ENCODE measurements at regions of chr6 and their contacts with region 1.

Region 1: GRCh38 chr6:80106418-80107235 is at the start of gene BCKDHB:
- DNase-seq: peak; percentile 98
- ATAC-seq: peak; percentile 98
- H3K4me3 Mint-ChIP-seq: peak within 1 kb of the TSS; percentile 90
- H3K27ac Mint-ChIP-seq: peak within 1 kb of the TSS; percentile 88
- H3K4me1 Mint-ChIP-seq: peaks cover 12% of the 10 kb centered on the region
- H3K27me3 Mint-ChIP-seq: peaks cover 6% of the 10 kb centered on the region
- total RNA-seq, gene BCKDHB: 13.1 to 21.4 TPM

Region 2: DNA sequence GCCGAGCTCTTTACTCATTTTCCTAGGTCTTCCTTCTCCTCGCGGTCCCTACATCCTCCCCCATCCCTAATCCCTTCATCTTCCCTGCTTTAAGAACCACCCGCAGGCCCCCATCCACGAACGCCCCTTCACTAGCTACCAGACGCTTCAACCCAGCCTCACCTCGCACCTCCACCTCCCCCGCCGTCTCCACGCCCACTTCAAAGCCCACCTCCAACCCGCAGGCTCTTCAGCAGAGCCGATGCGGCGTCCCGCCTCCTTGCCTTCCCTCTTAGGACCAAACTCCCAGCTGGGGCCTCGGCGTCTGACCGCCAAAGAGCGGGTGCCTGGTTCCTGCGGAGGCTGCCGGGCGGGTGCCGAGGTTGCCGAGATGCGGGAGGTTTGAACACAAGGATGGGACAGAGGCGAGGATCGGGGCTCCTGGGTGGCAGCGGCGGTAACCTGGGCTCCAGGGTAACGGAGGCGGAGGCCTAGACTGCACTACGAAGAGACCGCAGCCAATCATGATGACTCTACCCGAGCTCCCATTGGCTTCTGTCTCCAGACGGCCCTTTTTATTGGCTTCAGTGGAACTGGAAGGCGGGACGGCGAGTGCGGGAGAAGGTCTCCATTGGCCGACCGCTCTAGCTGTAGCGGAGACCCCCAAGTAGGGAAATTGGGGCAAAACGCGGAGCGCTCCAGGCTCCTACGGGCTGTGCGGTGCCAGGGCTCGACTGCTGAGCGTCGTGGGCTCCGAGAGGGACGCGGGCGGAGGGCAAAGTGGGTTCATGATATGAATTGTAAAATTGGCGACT is 569.5 kb before region 1 on chr6 and contains the start of gene LCA5:
- CTCF ChIA-PET with region 1: no interaction called
- POLR2A ChIA-PET with region 1: no interaction called
- intact Hi-C with region 1: loop called in 1 of 2 experiments (anchors 1 kb)
- DNase-seq: peak; percentile 90
- ATAC-seq: peak; percentile 100
- H3K4me3 Mint-ChIP-seq: no peak within 1 kb of the TSS
- H3K27ac Mint-ChIP-seq: no peak within 1 kb of the TSS
- H3K4me1 Mint-ChIP-seq: no peaks in the 10 kb centered on the region
- H3K27me3 Mint-ChIP-seq: peaks cover 8% of the 10 kb centered on the region
- total RNA-seq, gene LCA5: 0.25 to 0.32 TPM

Region 3: GRCh38 chr6:79777713-79778579 is 328.7 kb before region 1 on chr6:
- CTCF ChIA-PET with region 1: no interaction called
- POLR2A ChIA-PET with region 1: no interaction called
- intact Hi-C with region 1: loop called in 1 of 2 experiments (anchors 5 kb)
- DNase-seq: peak; percentile 93
- ATAC-seq: peak; percentile 88
- H3K4me3 Mint-ChIP-seq: peak overlapping the region; percentile 63
- H3K27ac Mint-ChIP-seq: peak overlapping the region; percentile 62
- H3K4me1 Mint-ChIP-seq: peaks cover 7% of the 10 kb centered on the region
- H3K27me3 Mint-ChIP-seq: peaks cover 4% of the 10 kb centered on the region

Region 4: GRCh38 chr6:79949233-79949632 is 157.4 kb before region 1 on chr6:
- CTCF ChIA-PET with region 1: interaction called, 29 read pairs
- POLR2A ChIA-PET with region 1: interaction called, 4 read pairs
- intact Hi-C with region 1: loop called (anchors 1 kb)
- DNase-seq: peak; percentile 83
- ATAC-seq: peak; percentile 33
- H3K4me3 Mint-ChIP-seq: no peak overlapping the region
- H3K27ac Mint-ChIP-seq: no peak overlapping the region
- H3K4me1 Mint-ChIP-seq: peaks cover 29% of the 10 kb centered on the region
- H3K27me3 Mint-ChIP-seq: peaks cover 22% of the 10 kb centered on the region

Region 5: GRCh38 chr6:80094017-80094416 is 12.6 kb before region 1 on chr6:
- CTCF ChIA-PET with region 1: interaction called, 13 read pairs
- POLR2A ChIA-PET with region 1: no interaction called
- intact Hi-C with region 1: no loop called
- DNase-seq: peak; percentile 23
- ATAC-seq: no peak
- H3K4me3 Mint-ChIP-seq: no peak overlapping the region
- H3K27ac Mint-ChIP-seq: no peak overlapping the region
- H3K4me1 Mint-ChIP-seq: peaks cover 2% of the 10 kb centered on the region
- H3K27me3 Mint-ChIP-seq: peaks cover 2% of the 10 kb centered on the region

Region 6: DNA sequence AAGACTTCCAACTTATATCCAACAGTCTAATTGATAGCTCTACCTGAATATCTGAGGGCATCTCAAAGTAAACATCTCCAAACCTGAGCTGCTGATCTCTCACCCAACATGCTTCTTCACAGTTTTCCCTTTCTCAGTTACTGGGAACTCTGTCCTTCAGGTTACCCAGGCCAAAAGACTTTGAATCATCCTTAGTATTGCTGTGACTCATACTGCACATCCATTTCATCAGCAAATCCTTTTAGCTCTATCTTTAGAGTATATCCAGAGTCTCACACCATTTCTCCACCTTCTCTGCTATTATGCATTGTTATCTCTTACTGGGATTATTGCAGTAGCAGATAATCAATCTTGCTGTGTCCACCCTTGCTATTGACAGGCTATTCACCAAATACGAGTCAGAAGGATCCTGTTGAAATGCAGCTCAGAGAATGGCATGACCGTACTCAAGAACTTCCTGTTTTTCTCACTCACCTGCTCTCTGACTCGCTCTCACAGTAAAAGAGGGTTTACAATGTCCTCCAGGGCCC is 57.1 kb after region 1 on chr6:
- CTCF ChIA-PET with region 1: interaction called, 4 read pairs
- POLR2A ChIA-PET with region 1: no interaction called
- intact Hi-C with region 1: loop called (anchors 1 to 2 kb)
- DNase-seq: peak; percentile 13
- ATAC-seq: peak; percentile 80
- H3K4me3 Mint-ChIP-seq: no peak overlapping the region
- H3K27ac Mint-ChIP-seq: no peak overlapping the region
- H3K4me1 Mint-ChIP-seq: peaks cover 2% of the 10 kb centered on the region
- H3K27me3 Mint-ChIP-seq: no peaks in the 10 kb centered on the region